GM12878 (cell line): ENCODE measurements at regions of chr3 and their contacts with region 1.

Region 1: DNA sequence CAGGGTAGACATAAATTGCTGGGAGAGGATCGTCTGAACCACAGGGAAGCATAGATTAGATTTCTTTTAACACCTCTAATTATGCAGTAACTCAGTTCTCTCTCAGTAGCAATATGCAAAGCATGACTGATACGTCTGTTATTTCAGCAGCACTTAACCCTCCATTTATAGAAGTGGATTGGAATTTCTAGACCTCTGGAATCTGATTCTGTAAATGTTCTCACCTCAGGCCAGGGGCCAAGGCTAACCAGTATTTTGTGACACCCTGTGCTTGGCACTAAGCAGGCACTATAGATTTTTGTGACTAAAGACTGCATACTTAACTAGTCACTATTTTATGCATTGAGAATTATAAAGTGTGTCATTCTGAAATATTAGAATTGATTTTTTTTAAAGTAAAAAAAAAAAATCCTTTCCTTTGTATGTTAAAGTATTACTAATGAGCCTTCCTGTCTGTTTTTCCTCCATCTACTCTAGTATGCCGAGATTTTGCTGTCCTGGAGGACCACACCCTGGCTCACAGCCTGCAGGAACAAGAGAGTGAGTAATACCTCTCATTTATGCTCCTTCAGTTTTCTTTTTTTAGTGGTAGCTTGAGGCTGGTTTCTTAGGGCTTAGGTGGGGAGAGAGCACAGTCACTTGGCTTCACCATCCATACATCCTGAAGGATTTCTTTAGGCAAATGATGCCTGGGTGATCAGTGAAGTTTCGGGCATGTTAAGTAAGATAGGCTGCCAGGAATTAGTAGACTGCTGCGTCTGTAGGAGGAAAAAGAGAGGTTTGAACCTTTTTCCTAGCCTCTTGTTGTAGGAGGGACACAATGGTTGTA is 26.5 kb upstream of the UTS2B start:
- DNase-seq: no peak
- ATAC-seq: 0 out of 3 replicates have a peak, but pooled peaks have one; percentile 5
- H3K4me3 ChIP-seq: no peak overlapping the region
- H3K27ac ChIP-seq: peak overlapping the region; percentile 28; the same call in 1 of the 2 replicates
- H3K4me1 ChIP-seq: peaks cover 26% of the 10 kb centered on the region
- H3K27me3 ChIP-seq: no peaks in the 10 kb centered on the region
- CTCF ChIP-seq: no peak
- EP300 ChIP-seq: no peak
- POLR2A ChIP-seq: no peak
- RAD21 ChIP-seq: no peak

Region 2: DNA sequence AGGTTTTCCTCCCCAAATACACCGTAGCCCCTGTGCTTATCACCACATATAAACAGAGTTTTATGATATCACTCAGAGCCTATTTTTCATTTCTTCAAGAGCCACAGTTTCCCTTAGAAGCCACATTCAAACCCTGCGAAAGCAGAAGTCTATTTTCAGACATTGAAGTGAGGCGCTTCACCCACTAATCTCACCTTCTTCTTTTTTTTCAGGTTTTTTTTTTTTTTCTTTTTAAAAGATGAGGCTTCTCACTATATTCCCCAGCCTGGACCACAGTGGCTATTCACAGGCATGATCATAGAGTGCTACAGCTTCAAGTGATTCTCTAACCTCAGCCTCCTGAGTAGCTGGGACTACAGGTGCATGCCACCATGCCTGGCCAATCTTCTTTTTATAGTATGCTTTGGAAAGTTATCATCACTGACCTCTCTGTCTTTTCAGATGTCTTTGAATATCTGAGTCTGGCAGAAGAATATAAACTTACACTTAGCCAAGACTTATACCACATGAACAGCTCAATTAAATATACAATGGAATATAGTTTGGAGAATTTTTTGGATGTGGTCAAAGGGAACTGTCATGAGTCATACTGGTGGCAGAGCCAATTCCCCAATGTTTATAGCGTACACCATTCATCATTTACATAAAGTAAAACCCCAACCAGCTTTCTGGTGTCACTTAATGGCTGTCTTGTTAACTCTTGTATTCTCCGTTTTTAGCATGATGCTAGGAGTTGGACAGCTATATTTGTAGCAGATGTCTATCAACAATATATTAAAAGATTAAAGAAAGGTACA is 87.3 kb before region 1 on chr3:
- CTCF ChIA-PET with region 1: interaction called, 4 read pairs
- POLR2A ChIA-PET with region 1: interaction called, 6 read pairs
- RAD21 ChIA-PET with region 1: interaction called, 6 read pairs
- SMC1A ChIA-PET with region 1: interaction called, 14 read pairs
- in situ Hi-C with region 1: no loop called
- intact Hi-C with region 1: no loop called
- DNase-seq: peak; percentile 49
- ATAC-seq: peak; percentile 87
- H3K4me3 ChIP-seq: no peak overlapping the region
- H3K27ac ChIP-seq: peak overlapping the region; percentile 46; the same call in 1 of the 2 replicates
- H3K4me1 ChIP-seq: peaks cover 11% of the 10 kb centered on the region
- H3K27me3 ChIP-seq: no peaks in the 10 kb centered on the region
- CTCF ChIP-seq: no peak
- EP300 ChIP-seq: no peak; a peak in 2 of 4 replicates
- POLR2A ChIP-seq: no peak
- RAD21 ChIP-seq: no peak

Region 3: DNA sequence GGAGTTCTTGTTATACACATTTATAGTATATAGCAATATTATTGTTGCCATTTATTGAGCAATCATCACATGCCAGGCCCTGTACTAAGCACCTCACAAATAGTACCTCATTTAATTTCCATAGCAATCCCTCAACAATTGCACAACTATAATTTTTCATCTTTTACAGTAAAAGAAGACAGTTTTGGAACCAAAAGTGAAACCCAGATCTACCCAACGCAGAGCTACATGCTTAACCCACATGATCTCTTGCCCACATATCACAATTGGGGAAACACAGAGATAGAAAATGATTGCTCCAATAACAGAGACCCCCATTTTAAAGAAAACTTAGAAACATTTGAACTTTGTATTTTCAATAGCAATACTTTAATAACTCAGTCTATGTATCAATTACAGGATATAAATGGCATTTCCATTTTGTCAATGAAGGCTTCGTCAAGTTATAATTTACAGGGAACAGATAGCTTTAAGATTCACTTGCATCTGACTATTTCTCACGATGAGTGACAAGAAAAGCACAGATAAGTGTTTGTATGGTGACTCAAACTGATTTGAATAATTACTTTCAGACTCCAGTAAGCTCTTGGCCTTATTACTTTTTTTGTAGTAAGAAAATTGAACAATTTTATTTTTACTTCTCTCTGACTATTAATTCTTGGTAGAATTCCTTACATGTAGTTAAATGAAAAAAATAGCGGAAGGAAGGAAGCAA is 66.4 kb before region 1 on chr3:
- CTCF ChIA-PET with region 1: interaction called, 6 read pairs
- POLR2A ChIA-PET with region 1: interaction called, 3 read pairs
- RAD21 ChIA-PET with region 1: interaction called, 17 read pairs
- SMC1A ChIA-PET with region 1: interaction called, 20 read pairs
- in situ Hi-C with region 1: no loop called
- intact Hi-C with region 1: no loop called
- DNase-seq: no peak
- ATAC-seq: peak; percentile 93
- H3K4me3 ChIP-seq: no peak overlapping the region
- H3K27ac ChIP-seq: peak overlapping the region; percentile 68
- H3K4me1 ChIP-seq: peaks cover 13% of the 10 kb centered on the region
- H3K27me3 ChIP-seq: no peaks in the 10 kb centered on the region
- CTCF ChIP-seq: no peak
- EP300 ChIP-seq: no peak
- POLR2A ChIP-seq: no peak
- RAD21 ChIP-seq: no peak

Region 4: DNA sequence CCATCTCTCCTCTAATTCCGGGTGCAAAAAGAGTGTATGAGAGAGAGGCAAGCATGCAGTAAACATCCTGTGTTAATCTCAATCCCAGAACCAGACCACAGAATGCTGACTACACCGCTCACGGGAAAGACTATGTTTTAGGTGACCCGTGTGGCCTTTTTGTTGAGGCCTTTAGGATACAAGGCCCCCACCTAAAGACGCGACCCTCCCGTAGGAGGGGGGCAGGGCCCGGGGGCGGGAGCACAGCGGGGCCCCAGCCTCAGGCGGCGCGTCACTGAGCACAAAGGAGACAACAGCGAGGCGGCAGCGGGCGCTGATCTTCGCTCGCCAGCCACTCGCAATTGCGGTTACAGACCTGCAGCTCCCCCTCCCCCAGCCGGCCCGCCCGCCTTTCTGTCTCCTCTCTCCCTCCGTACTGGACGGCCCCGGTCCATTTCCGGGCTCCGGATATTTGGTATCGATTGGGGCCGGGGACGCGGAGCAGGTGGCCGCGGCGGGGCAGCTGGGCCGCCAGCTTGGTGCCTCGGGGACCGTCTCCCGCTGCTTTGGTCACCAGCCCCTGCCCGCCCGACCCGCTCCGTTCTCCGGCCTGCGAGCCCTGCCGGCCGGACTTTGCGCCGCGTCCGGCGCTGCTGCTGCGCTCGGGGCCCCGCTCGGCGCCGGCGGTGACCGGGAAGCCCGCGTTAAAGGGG is 27.7 kb before region 1 on chr3 and contains the start of gene CCDC50:
- CTCF ChIA-PET with region 1: interaction called, 6 read pairs
- POLR2A ChIA-PET with region 1: interaction called, 21 read pairs
- RAD21 ChIA-PET with region 1: interaction called, 62 read pairs
- SMC1A ChIA-PET with region 1: interaction called, 48 read pairs
- in situ Hi-C with region 1: no loop called
- intact Hi-C with region 1: no loop called
- DNase-seq: no peak
- ATAC-seq: peak; percentile 74
- H3K4me3 ChIP-seq: peak within 1 kb of the TSS; percentile 73
- H3K27ac ChIP-seq: peak within 1 kb of the TSS; percentile 78
- H3K4me1 ChIP-seq: peaks cover 15% of the 10 kb centered on the region
- H3K27me3 ChIP-seq: no peaks in the 10 kb centered on the region
- CTCF ChIP-seq: no peak
- EP300 ChIP-seq: peak; percentile 46 to 50; a peak in 3 of 4 replicates
- POLR2A ChIP-seq: peak; percentile 86
- RAD21 ChIP-seq: no peak
- polyA plus RNA-seq, gene CCDC50: 46.7 to 61.5 TPM

Region 5: GRCh38 chr3:191345334-191345733 is 11.5 kb before region 1 on chr3:
- CTCF ChIA-PET with region 1: interaction called, 7 read pairs
- POLR2A ChIA-PET with region 1: interaction called, 49 read pairs
- RAD21 ChIA-PET with region 1: interaction called, 108 read pairs
- SMC1A ChIA-PET with region 1: interaction called, 208 read pairs
- in situ Hi-C with region 1: no loop called
- intact Hi-C with region 1: no loop called
- DNase-seq: no peak
- ATAC-seq: no peak
- H3K4me3 ChIP-seq: no peak overlapping the region
- H3K27ac ChIP-seq: no peak overlapping the region
- H3K4me1 ChIP-seq: no peaks in the 10 kb centered on the region; the same call in 1 of the 2 replicates
- H3K27me3 ChIP-seq: no peaks in the 10 kb centered on the region
- CTCF ChIP-seq: no peak
- EP300 ChIP-seq: no peak
- POLR2A ChIP-seq: no peak
- RAD21 ChIP-seq: no peak

Region 6: GRCh38 chr3:191383124-191383523 is 26.3 kb after region 1 on chr3:
- CTCF ChIA-PET with region 1: interaction called, 6 read pairs
- POLR2A ChIA-PET with region 1: interaction called, 3 read pairs
- RAD21 ChIA-PET with region 1: interaction called, 7 read pairs
- SMC1A ChIA-PET with region 1: interaction called, 33 read pairs
- in situ Hi-C with region 1: no loop called
- intact Hi-C with region 1: no loop called
- DNase-seq: no peak
- ATAC-seq: no peak
- H3K4me3 ChIP-seq: no peak overlapping the region
- H3K27ac ChIP-seq: no peak overlapping the region
- H3K4me1 ChIP-seq: peaks cover 12% of the 10 kb centered on the region
- H3K27me3 ChIP-seq: no peaks in the 10 kb centered on the region
- CTCF ChIP-seq: no peak
- EP300 ChIP-seq: no peak
- POLR2A ChIP-seq: no peak
- RAD21 ChIP-seq: no peak

Region 7: GRCh38 chr3:191412759-191413158 is 55.9 kb after region 1 on chr3:
- CTCF ChIA-PET with region 1: no interaction called
- POLR2A ChIA-PET with region 1: no interaction called
- RAD21 ChIA-PET with region 1: no interaction called
- SMC1A ChIA-PET with region 1: no interaction called
- in situ Hi-C with region 1: no loop called
- intact Hi-C with region 1: no loop called
- DNase-seq: no peak
- ATAC-seq: no peak; the same call in 2 of the 3 replicates
- H3K4me3 ChIP-seq: no peak overlapping the region
- H3K27ac ChIP-seq: no peak overlapping the region
- H3K4me1 ChIP-seq: no peaks in the 10 kb centered on the region
- H3K27me3 ChIP-seq: no peaks in the 10 kb centered on the region
- CTCF ChIP-seq: no peak
- EP300 ChIP-seq: no peak
- POLR2A ChIP-seq: no peak
- RAD21 ChIP-seq: no peak